PC-9 (cell line): ENCODE measurements at regions of chr13 and their contacts with region 1.

Region 1: GRCh38 chr13:97221989-97222700 is at the start of gene MBNL2:
- DNase-seq: peak; percentile 87 to 92
- H3K4me3 ChIP-seq: peak within 1 kb of the TSS; percentile 81
- H3K27ac ChIP-seq: peak within 1 kb of the TSS; percentile 85
- H3K4me1 ChIP-seq: peaks cover 48% of the 10 kb centered on the region
- H3K27me3 ChIP-seq: no peaks in the 10 kb centered on the region
- CTCF ChIP-seq: no peak
- total RNA-seq, gene MBNL2: 57.7 and 91.3 TPM in 2 replicates

Region 2: DNA sequence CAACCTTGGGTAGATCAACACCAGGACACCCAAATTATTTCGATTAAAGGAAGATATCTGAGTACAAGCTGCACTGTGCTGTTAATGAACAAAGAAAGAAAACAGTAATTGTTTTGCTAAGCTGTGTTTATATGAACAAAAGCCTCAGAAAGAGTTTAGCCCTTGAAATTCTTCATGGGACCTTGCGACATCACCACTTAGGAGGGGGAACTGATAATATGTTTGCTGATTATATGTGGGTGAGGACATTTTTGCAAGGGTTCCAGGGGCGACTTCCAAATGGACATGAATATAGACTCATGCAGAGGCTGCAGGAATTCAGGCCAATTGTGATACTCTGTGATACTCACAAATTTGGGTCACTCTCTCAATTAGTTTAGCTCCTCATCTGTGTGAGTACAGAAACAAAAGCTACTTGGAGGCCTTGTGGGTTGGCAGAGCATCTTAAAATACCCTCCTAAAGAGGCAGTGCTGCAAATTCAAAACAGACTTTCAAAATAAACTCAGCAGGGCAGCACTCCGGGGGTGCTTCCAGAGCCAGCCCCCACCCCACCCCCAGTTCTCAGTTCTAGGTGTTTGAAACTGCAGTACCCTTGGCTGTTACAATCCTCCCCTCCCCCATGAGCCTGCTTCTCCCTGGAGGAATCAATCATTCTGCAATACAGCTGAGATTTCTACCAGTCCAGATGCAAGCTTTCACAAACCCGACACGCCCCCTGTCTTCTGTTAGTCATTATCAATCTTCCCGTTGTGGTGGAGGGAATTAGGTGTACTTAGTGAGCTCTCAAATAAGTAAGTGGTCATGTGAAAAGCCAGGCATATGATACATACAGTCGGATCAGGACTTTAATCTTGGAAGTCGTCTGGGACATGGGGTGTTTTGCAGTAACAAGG is 97.0 kb before region 1 on chr13:
- CTCF ChIA-PET with region 1: no interaction called
- POLR2A ChIA-PET with region 1: interaction called, 10 read pairs
- intact Hi-C with region 1: no loop called
- DNase-seq: peak; percentile 39 to 90
- H3K4me3 ChIP-seq: peak overlapping the region; percentile 37; the same call in 1 of the 2 replicates
- H3K27ac ChIP-seq: peak overlapping the region; percentile 81
- H3K4me1 ChIP-seq: peaks cover 81% of the 10 kb centered on the region
- H3K27me3 ChIP-seq: no peaks in the 10 kb centered on the region
- CTCF ChIP-seq: peak; percentile 55; the same call in 1 of the 2 replicates

Region 3: DNA sequence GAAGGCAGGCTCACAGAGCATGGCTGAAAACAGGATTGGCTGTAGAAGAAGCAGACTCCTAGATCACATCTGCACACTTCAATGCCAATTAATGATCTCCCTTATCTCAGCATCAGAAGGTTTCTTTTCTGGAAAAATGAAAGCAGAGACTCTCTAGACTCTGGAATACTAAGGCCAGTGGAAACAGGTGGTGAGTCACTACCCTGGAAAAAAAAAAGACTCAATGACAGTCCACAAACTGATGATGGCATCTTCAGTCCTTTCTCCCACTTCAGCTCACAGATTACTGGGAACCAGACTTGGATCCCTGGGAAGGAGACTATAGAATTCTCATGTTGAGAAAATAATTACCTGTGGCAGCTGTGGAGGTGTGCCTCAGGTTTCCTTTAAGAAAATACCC is 47.5 kb before region 1 on chr13:
- CTCF ChIA-PET with region 1: no interaction called
- POLR2A ChIA-PET with region 1: interaction called, 12 read pairs
- intact Hi-C with region 1: loop called (anchors 5 kb)
- DNase-seq: no peak
- H3K4me3 ChIP-seq: no peak overlapping the region
- H3K27ac ChIP-seq: no peak overlapping the region
- H3K4me1 ChIP-seq: peaks cover 22% of the 10 kb centered on the region
- H3K27me3 ChIP-seq: no peaks in the 10 kb centered on the region
- CTCF ChIP-seq: no peak

Region 4: GRCh38 chr13:97257800-97258799 is 36.0 kb after region 1 on chr13:
- CTCF ChIA-PET with region 1: no interaction called
- POLR2A ChIA-PET with region 1: interaction called, 23 read pairs
- intact Hi-C with region 1: loop called (anchors 1 kb)
- DNase-seq: peak; percentile 71 to 100
- H3K4me3 ChIP-seq: peak overlapping the region; percentile 34
- H3K27ac ChIP-seq: peak overlapping the region; percentile 98
- H3K4me1 ChIP-seq: peaks cover 82% of the 10 kb centered on the region
- H3K27me3 ChIP-seq: no peaks in the 10 kb centered on the region
- CTCF ChIP-seq: peak; percentile 56; the same call in 1 of the 2 replicates

Region 5: DNA sequence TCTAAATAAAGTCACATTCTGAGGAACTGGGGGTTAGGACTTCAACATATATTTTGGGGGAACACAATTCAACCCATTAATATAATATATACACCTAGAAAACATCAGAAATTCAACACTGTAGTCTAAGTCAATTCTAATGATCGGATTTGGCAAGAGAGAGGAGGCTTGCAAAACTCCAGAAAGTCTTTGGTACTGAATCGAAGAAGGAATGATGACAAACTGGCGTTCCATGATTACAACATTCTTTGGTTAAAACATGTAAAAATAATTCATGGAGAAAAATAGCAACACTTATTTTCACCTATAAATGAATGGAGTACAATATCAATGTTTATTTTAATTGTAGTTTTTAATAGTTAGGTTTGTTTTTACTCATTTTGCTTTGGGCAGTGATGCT is 62.4 kb after region 1 on chr13:
- CTCF ChIA-PET with region 1: no interaction called
- POLR2A ChIA-PET with region 1: no interaction called
- intact Hi-C with region 1: no loop called
- DNase-seq: no peak
- H3K4me3 ChIP-seq: no peak overlapping the region
- H3K27ac ChIP-seq: no peak overlapping the region
- H3K4me1 ChIP-seq: peaks cover 22% of the 10 kb centered on the region
- H3K27me3 ChIP-seq: no peaks in the 10 kb centered on the region
- CTCF ChIP-seq: no peak

Region 6: GRCh38 chr13:97344265-97345175 is 122.4 kb after region 1 on chr13:
- CTCF ChIA-PET with region 1: no interaction called
- POLR2A ChIA-PET with region 1: interaction called, 7 read pairs
- intact Hi-C with region 1: loop called (anchors 1 kb)
- DNase-seq: peak; percentile 43 to 50
- H3K4me3 ChIP-seq: no peak overlapping the region
- H3K27ac ChIP-seq: 0 out of 2 replicates have a peak overlapping the region, but pooled peaks have one; percentile 14
- H3K4me1 ChIP-seq: no peaks in the 10 kb centered on the region
- H3K27me3 ChIP-seq: no peaks in the 10 kb centered on the region
- CTCF ChIP-seq: peak; percentile 76

Region 7: DNA sequence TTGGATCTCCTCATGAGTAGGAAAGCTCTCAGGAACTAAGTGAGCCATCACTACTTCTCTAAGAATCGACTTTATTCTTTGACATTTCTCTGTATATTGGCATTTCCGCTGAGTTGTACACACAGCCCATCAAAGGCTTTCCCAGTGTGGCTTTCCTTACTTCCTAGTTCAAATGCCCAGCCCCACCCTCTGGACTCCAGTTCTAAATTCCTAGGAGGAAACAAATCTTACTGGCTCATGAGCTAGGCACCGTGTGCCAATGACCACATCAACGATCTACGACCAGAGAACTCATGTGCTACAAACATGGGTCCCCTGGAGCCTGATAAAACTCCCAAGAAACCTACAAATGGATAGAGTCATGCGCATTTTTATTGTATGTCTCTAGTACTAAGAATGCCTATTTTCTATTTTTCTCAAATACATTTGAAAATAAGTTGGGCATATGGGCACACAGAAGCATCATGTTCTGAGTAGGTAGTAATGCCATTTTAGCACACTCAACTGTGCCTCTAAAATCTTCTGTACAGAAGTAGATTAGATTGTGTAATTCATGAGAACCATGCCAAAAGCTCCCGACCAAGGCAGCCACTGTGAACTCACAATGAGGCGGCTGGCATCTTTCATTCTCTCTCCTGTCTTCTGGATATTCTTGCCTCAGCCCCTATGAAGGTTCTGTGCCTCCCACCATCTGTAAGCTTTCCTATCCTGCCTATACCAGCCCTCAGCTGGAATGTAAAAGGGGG is 201.3 kb after region 1 on chr13:
- CTCF ChIA-PET with region 1: no interaction called
- POLR2A ChIA-PET with region 1: no interaction called
- intact Hi-C with region 1: no loop called
- DNase-seq: no peak
- H3K4me3 ChIP-seq: no peak overlapping the region
- H3K27ac ChIP-seq: no peak overlapping the region
- H3K4me1 ChIP-seq: no peaks in the 10 kb centered on the region
- H3K27me3 ChIP-seq: no peaks in the 10 kb centered on the region
- CTCF ChIP-seq: no peak

Region 8: DNA sequence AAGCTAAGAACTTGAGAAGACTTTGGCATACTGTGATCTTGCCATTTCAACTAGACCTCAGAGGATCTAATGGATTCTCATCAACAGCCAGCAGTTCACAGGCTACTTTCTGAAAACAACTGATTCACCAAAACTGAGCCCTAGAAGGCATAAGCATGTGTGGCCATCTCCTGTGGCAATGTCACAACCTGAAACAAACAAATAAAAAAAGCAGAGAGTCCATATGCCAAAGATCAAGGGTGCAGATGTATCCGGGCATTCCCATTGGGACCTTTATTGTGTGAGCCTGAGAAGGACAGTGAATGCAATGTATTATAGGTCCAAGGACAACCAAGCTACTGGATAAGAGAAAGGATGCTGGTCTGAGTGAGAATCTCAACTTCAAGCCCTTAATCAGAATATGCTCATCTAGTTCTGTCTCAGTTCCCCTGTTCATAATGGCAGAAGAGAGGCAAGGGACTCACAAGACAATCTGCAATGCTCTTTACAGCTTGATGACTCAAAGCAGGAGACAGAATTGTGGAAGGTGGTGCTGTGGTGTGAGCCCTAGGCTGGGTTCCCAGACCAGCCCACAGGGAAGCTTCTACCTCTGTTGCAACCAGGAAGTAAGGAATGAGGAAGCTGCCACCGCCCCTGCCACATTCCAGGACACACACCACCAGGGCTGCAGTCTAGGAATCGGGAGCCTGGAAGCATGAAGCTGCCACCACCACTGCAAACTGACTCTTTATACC is 345.5 kb after region 1 on chr13:
- CTCF ChIA-PET with region 1: no interaction called
- POLR2A ChIA-PET with region 1: no interaction called
- intact Hi-C with region 1: loop called (anchors 10 kb)
- DNase-seq: peak; percentile 74 to 90
- H3K4me3 ChIP-seq: no peak overlapping the region
- H3K27ac ChIP-seq: no peak overlapping the region
- H3K4me1 ChIP-seq: peaks cover 23% of the 10 kb centered on the region
- H3K27me3 ChIP-seq: no peaks in the 10 kb centered on the region
- CTCF ChIP-seq: no peak